PC-3 (cell line): ENCODE measurements at regions of chr5 and their contacts with region 1.

Region 1: GRCh38 chr5:170420780-170421412 is 31.7 kb upstream of the KCNMB1 start:
- DNase-seq: peak; percentile 61
- ATAC-seq: peak; percentile 74
- H3K4me3 ChIP-seq: no peak overlapping the region
- H3K27ac ChIP-seq: no peak overlapping the region
- H3K4me1 ChIP-seq: no peaks in the 10 kb centered on the region
- H3K27me3 ChIP-seq: peaks cover 28% of the 10 kb centered on the region
- CTCF ChIP-seq: peak; percentile 78

Region 2: DNA sequence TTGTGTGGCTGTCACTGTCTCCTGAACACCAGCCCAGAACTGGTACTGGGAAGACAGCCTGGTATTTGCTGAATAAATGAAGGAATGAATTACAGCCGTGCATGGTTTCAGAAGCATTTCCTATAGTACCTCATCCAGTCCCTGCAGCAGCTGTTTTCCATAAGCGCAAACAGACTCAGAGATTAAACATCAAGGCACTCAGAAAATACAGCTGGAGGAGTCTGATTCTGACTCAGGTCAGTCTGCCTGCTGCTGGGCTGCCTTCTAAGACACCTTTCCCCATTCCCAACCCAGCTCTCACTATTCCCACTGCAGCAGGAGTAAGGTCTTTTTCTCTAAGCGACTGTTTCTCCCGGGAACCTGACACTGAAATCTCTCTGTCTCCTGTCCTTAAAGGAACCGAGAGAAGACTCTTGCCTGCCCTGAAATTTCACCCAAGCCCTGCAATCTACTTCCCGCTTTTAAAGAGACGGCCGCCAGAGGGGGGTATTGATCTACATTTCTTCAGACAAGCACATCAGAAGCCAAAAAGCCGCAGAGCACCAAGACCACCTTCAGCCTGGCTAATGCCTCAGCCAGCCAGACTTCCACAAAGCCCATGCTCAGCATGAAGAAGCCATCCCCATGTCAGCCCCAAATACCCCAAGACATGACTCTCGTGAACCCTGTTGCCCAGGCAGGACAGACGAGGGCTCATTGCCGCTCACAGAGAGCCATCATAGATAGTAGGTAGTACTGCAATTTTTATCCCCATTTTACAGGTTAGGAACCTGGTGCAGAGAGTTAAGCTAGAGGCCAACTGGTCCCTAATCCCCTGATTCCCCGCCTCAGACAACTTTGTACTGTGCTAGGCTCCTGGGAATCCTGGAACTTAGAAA is 320.6 kb before region 1 on chr5:
- CTCF ChIA-PET with region 1: no interaction called
- POLR2A ChIA-PET with region 1: no interaction called
- intact Hi-C with region 1: loop called (anchors 5 kb)
- DNase-seq: peak; percentile 74
- ATAC-seq: peak; percentile 81
- H3K4me3 ChIP-seq: no peak overlapping the region
- H3K27ac ChIP-seq: no peak overlapping the region
- H3K4me1 ChIP-seq: peaks cover 7% of the 10 kb centered on the region; the same call in 1 of the 2 replicates
- H3K27me3 ChIP-seq: no peaks in the 10 kb centered on the region
- CTCF ChIP-seq: peak; percentile 75

Region 3: DNA sequence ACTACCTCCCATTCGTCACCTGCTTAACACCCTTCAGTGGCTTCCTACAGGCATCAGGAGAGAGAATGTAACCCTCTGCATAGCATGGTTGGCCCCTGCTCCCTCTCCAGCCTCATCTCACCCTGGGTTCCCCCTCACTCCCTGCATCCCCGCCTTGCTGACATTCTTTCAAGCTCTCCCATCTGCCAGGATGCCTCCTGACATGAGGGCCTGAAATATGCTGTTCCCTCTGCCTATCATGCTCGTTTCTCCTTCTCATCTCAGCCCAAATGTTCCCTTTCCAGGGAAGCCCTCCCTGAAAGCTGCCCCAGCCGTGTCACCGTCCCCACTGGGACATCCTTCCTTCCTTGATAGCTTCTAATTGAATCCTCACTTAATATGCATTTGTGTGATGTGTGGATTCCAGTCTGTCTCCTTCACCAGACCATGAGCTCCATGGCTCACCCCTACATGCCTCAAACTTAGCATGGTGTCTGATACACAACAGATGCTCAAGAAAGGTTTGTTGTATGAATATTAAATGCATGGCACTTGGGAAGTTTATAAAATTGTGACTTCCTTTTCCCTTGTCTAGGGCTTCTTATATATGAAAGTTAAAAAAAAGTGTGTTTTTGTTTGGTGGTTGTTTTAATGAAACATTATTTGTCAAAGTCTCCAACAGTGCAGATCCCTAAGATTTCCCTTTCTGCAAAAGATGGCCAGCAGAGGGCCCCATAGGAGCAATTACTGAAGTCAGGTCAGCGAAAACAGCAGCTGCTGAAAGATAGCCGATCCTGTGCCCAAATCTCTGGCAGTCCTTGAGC is 195.4 kb before region 1 on chr5:
- CTCF ChIA-PET with region 1: interaction called, 3 read pairs
- POLR2A ChIA-PET with region 1: no interaction called
- intact Hi-C with region 1: loop called (anchors 1 kb)
- DNase-seq: peak; percentile 76
- ATAC-seq: peak; percentile 90
- H3K4me3 ChIP-seq: no peak overlapping the region
- H3K27ac ChIP-seq: no peak overlapping the region
- H3K4me1 ChIP-seq: peaks cover 11% of the 10 kb centered on the region
- H3K27me3 ChIP-seq: no peaks in the 10 kb centered on the region
- CTCF ChIP-seq: peak; percentile 78

Region 4: DNA sequence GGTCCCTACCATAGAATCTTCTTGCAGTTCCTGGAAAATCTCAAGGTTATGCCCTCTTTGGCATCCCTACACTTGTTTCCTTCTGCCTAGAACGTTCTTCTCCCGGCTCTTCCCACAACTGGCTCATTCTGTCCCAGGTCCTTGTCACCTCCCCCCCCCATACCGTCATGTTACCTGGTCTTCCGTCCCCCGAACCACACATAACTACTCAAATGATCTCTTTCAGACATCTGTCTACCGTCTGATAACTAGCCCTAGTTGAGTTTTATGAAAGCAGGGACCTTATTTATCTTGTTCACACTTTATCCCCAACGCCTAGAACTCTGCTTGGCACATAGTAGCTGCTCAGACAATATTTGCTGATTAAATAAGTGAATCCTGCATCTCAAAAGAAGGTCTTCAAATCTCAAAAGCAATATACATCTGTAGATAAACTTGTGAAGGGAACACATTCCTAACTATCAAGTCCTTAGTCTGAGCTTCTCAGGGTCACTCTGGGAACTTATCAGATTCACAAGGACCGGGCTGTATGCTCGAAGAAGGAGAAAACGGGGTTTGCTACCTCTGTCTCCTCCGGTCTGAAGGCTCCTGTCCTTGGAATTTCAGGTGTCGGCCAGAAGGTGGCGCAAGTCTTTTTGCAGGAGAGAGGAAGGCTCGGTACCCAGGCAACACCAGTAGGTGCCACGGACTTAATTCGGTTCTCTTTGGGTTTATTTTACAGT is 153.3 kb before region 1 on chr5:
- CTCF ChIA-PET with region 1: no interaction called
- POLR2A ChIA-PET with region 1: no interaction called
- intact Hi-C with region 1: loop called (anchors 1 kb)
- DNase-seq: peak; percentile 65
- ATAC-seq: peak; percentile 86
- H3K4me3 ChIP-seq: peak overlapping the region; percentile 35
- H3K27ac ChIP-seq: no peak overlapping the region
- H3K4me1 ChIP-seq: no peaks in the 10 kb centered on the region
- H3K27me3 ChIP-seq: peaks cover 43% of the 10 kb centered on the region
- CTCF ChIP-seq: peak; percentile 76